ENCODE measurements at regions of chr12 and their contacts with region 1.

Region 1: DNA sequence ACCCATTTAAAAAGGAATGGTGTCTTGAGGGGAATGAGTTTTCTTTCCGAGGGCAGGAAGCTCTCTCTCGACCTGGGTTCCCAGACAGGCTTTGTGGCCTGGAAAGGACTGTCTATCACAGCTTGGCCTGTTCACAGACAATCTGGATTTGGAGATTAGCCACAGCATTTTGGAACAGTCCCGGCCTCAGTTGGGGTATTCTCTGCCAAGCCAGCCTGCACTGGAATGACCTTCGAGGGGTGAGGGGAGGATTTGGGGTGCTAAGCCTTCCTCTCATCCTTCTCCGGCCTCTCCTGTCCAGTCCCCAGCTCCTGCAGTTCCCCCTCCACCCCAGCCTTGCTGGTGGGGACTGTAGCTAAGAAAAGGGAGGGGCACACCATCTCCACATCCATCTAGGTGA is 13.0 kb downstream of the TBX5 start:
- DNase-seq: no peak
- H3K4me3 ChIP-seq: no peak overlapping the region
- H3K27ac ChIP-seq: no peak overlapping the region
- H3K4me1 ChIP-seq: no peaks in the 10 kb centered on the region
- H3K27me3 ChIP-seq: peaks cover 13% of the 10 kb centered on the region
- CTCF ChIP-seq: no peak

Region 2: GRCh38 chr12:114355389-114356088 is 37.4 kb before region 1 on chr12:
- CTCF ChIA-PET with region 1: no interaction called
- dilution Hi-C with region 1: loop called (anchors 5 kb)
- in situ Hi-C with region 1: no loop called
- intact Hi-C with region 1: no loop called
- DNase-seq: no peak
- H3K4me3 ChIP-seq: no peak overlapping the region
- H3K27ac ChIP-seq: no peak overlapping the region
- H3K4me1 ChIP-seq: no peaks in the 10 kb centered on the region
- H3K27me3 ChIP-seq: no peaks in the 10 kb centered on the region
- CTCF ChIP-seq: no peak

Measured in mammary epithelial cell (primary cell).